Dendritic cell treated with granulocyte-macrophage colony-stimulating factor and Interleukin-4, amounts not matched to agents 40 ng/mL and 50 ng/mL, for 4 days (primary cell): ENCODE measurements at regions of chr5 and their contacts with region 1.

Region 1: DNA sequence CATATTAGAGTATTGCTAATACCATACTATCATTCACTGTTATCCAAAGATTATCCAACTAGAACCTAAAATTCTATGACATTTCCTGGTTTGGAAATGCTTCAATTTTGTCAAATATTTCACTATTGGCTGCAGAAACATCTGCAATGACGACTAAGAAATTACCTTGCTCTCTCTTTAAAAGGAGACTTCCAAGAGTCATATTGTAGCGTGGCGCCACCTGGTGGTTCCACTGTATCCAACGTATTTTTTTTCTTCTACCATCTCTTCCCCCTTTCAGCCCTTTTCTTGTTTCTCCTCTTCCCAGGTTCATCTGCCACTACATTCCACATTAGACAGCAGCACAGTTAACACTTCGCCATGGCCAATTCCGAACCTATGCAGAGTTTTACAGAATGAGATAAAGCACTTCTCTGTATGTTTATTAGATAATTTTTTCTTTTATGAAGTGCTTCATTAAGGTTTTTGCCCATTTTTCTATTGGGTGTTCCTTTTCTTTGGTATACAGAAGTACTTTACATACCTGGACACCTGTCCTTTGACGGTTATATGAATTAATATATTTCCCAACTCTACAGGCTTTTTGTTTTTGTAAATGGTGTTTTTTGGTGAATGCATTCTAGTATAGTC is 153.5 kb downstream of the CDC42SE2 start:
- H3K4me3 Mint-ChIP-seq: no peak overlapping the region
- H3K27ac Mint-ChIP-seq: no peak overlapping the region
- H3K4me1 Mint-ChIP-seq: peaks cover 13% of the 10 kb centered on the region
- H3K27me3 Mint-ChIP-seq: no peaks in the 10 kb centered on the region

Region 2: GRCh38 chr5:129804705-129805104 is 1612.7 kb before region 1 on chr5:
- intact Hi-C with region 1: no loop called
- H3K4me3 Mint-ChIP-seq: no peak overlapping the region
- H3K27ac Mint-ChIP-seq: no peak overlapping the region
- H3K4me1 Mint-ChIP-seq: no peaks in the 10 kb centered on the region
- H3K27me3 Mint-ChIP-seq: no peaks in the 10 kb centered on the region

Region 3: GRCh38 chr5:130109152-130109551 is 1308.2 kb before region 1 on chr5:
- intact Hi-C with region 1: loop called (anchors 5 kb)
- H3K4me3 Mint-ChIP-seq: no peak overlapping the region
- H3K27ac Mint-ChIP-seq: no peak overlapping the region
- H3K4me1 Mint-ChIP-seq: no peaks in the 10 kb centered on the region
- H3K27me3 Mint-ChIP-seq: no peaks in the 10 kb centered on the region

Region 4: GRCh38 chr5:130992095-130992494 is 425.3 kb before region 1 on chr5:
- intact Hi-C with region 1: no loop called
- H3K4me3 Mint-ChIP-seq: no peak overlapping the region
- H3K27ac Mint-ChIP-seq: no peak overlapping the region
- H3K4me1 Mint-ChIP-seq: no peaks in the 10 kb centered on the region
- H3K27me3 Mint-ChIP-seq: no peaks in the 10 kb centered on the region